MCF 10A (cell line): ENCODE measurements at regions of chr5 and their contacts with region 1.

Region 1: DNA sequence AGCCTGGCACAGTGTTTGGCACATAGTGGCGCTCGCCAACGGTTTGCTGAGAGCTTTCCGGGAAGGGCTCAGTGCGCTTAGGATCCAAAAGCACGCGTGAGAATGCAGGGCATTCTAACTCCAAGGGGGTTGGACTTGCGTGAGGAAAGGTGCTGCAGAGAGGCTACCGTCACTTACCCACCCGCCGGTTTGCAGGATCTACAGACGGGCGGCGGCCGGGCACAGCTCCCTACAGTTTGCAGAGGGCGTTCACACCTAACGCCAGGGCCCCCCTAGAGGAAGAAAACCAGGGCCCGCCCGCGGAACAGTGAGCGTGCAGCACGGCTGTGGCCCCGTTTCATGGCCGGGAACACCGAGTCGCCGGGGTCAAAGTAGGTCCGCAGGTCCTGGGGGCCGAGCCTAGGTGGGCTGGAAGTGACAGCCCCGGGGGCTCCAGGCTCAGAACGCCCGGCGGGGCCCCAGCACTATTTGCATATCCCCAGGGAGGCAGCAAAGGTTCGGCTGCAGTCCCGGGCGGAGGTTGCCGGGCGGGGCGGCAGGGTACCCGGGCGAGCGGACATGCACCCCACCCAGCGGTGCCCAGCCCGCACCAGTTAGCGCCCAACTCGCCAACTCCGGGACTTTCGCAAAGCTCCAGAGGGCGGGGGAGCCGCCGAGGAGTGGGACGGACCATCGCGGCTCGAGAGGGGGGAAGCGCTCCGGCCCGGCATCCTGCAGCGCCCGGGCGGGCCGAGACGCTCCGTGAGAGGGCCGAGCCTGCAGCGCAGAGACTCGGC is 526 bp upstream of the GALNT10 start:
- DNase-seq: peak; percentile 93
- H3K4me3 Mint-ChIP-seq: peak overlapping the region; percentile 81
- H3K27ac Mint-ChIP-seq: peak overlapping the region; percentile 15
- H3K4me1 Mint-ChIP-seq: peaks cover 44% of the 10 kb centered on the region
- H3K27me3 Mint-ChIP-seq: no peaks in the 10 kb centered on the region
- CTCF ChIP-seq: peak; percentile 56

Region 2: GRCh38 chr5:154038707-154039457 is 151.1 kb before region 1 on chr5 and contains the starts of genes FAM114A2 and MFAP3:
- CTCF ChIA-PET with region 1: no interaction called
- POLR2A ChIA-PET with region 1: interaction called, 15 read pairs
- intact Hi-C with region 1: no loop called
- DNase-seq: peak; percentile 93
- H3K4me3 Mint-ChIP-seq: peak within 1 kb of the TSS; percentile 96
- H3K27ac Mint-ChIP-seq: peak within 1 kb of the TSS; percentile 98
- H3K4me1 Mint-ChIP-seq: peaks cover 39% of the 10 kb centered on the region
- H3K27me3 Mint-ChIP-seq: no peaks in the 10 kb centered on the region
- CTCF ChIP-seq: no peak
- total RNA-seq, gene FAM114A2: 48.8 and 76.3 TPM in 2 replicates
- total RNA-seq, gene MFAP3: 48.8 and 56.0 TPM in 2 replicates

Region 3: GRCh38 chr5:154214371-154215106 is 24.5 kb after region 1 on chr5:
- CTCF ChIA-PET with region 1: interaction called, 8 read pairs
- POLR2A ChIA-PET with region 1: interaction called, 31 read pairs
- intact Hi-C with region 1: no loop called
- DNase-seq: peak; percentile 92
- H3K4me3 Mint-ChIP-seq: peak overlapping the region; percentile 63
- H3K27ac Mint-ChIP-seq: peak overlapping the region; percentile 85
- H3K4me1 Mint-ChIP-seq: peaks cover 27% of the 10 kb centered on the region
- H3K27me3 Mint-ChIP-seq: no peaks in the 10 kb centered on the region
- CTCF ChIP-seq: no peak

Region 4: GRCh38 chr5:154249826-154250225 is 59.8 kb after region 1 on chr5:
- CTCF ChIA-PET with region 1: no interaction called
- POLR2A ChIA-PET with region 1: no interaction called
- intact Hi-C with region 1: no loop called
- DNase-seq: no peak
- H3K4me3 Mint-ChIP-seq: no peak overlapping the region
- H3K27ac Mint-ChIP-seq: no peak overlapping the region
- H3K4me1 Mint-ChIP-seq: peaks cover 4% of the 10 kb centered on the region
- H3K27me3 Mint-ChIP-seq: no peaks in the 10 kb centered on the region
- CTCF ChIP-seq: no peak

Region 5: DNA sequence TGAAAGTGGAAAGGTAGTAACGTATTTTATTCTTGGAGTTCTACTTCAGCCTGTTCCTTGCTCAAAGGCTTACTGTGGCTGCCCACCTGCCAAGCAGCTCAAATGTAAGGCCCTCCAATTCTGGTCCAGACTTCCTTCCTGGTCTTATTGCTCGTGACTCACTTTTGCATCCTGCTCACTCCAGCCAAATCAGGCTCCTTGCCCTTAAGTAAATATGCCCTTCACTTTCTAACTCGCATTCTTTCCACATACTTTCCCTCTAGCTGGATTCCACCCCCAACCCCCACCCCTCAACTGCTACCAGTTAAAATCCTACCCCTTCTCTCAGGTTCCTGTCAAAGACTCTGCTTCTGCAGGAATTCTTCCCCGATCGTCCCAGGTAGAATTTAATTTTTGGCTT is 97.1 kb after region 1 on chr5:
- CTCF ChIA-PET with region 1: interaction called, 4 read pairs
- POLR2A ChIA-PET with region 1: interaction called, 5 read pairs
- intact Hi-C with region 1: loop called (anchors 5 kb)
- DNase-seq: peak; percentile 87
- H3K4me3 Mint-ChIP-seq: no peak overlapping the region
- H3K27ac Mint-ChIP-seq: peak overlapping the region; percentile 23
- H3K4me1 Mint-ChIP-seq: peaks cover 34% of the 10 kb centered on the region
- H3K27me3 Mint-ChIP-seq: no peaks in the 10 kb centered on the region
- CTCF ChIP-seq: no peak

Region 6: DNA sequence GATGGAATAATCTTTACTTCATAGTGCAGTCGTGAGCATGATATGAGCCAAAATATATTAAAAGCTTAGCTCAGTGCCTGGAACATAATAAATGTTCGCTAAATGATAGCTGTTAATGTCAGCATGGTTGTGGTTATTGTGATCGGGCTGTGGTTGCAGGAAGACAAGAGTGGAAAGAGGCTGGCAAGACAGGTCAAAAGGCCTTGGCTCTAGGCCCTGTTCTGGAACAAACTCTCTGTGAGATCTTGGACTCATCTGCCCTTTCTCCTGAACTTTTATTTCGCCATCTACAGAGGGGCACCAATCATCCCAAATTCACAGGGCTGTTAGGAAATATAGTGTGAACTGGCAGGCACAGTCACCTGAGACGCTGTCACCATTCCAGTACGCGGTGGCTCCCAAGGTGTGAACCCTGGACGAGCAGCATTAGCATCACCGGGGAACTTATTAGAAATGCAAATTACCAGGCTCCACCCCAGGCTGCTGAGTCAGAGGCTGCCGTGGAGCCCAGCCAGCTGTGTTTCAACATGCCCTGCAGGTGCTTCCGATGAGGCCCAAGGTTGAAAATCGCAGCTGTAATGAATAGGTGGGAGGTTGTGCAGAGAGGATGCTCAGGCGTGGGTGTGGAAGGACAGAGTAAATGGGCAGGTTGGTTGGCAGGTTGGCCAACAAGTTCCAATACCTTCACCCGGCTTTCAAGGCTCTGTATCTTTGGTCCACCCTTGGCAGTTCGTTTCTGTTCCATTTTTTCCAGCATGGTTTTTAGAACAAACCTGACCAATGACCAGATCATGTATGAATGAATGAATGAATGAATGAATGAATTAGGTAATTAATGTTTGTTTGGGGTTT is 205.6 kb after region 1 on chr5:
- CTCF ChIA-PET with region 1: interaction called, 11 read pairs
- POLR2A ChIA-PET with region 1: interaction called, 18 read pairs
- intact Hi-C with region 1: loop called (anchors 1 kb)
- DNase-seq: peak; percentile 97
- H3K4me3 Mint-ChIP-seq: peak overlapping the region; percentile 37
- H3K27ac Mint-ChIP-seq: peak overlapping the region; percentile 6
- H3K4me1 Mint-ChIP-seq: peaks cover 34% of the 10 kb centered on the region
- H3K27me3 Mint-ChIP-seq: no peaks in the 10 kb centered on the region
- CTCF ChIP-seq: no peak